Mammary epithelial cell (primary cell): ENCODE measurements at regions of chr6 and their contacts with region 1.

Region 1: GRCh38 chr6:89749918-89750317 is 69.7 kb downstream of the MDN1 start:
- DNase-seq: no peak
- H3K4me3 ChIP-seq: no peak overlapping the region
- H3K27ac ChIP-seq: no peak overlapping the region
- H3K4me1 ChIP-seq: peaks cover 8% of the 10 kb centered on the region
- H3K27me3 ChIP-seq: no peaks in the 10 kb centered on the region
- CTCF ChIP-seq: no peak

Region 2: GRCh38 chr6:89644873-89645272 is 105.0 kb before region 1 on chr6:
- CTCF ChIA-PET with region 1: no interaction called
- dilution Hi-C with region 1: loop called (anchors 5 kb)
- in situ Hi-C with region 1: no loop called
- intact Hi-C with region 1: no loop called
- DNase-seq: peak; percentile 58
- H3K4me3 ChIP-seq: no peak overlapping the region
- H3K27ac ChIP-seq: peak overlapping the region; percentile 30
- H3K4me1 ChIP-seq: peaks cover 11% of the 10 kb centered on the region
- H3K27me3 ChIP-seq: no peaks in the 10 kb centered on the region
- CTCF ChIP-seq: no peak

Region 3: GRCh38 chr6:89792873-89793272 is 43.0 kb after region 1 on chr6:
- CTCF ChIA-PET with region 1: no interaction called
- dilution Hi-C with region 1: loop called (anchors 5 kb)
- in situ Hi-C with region 1: no loop called
- intact Hi-C with region 1: no loop called
- DNase-seq: peak; percentile 7
- H3K4me3 ChIP-seq: no peak overlapping the region
- H3K27ac ChIP-seq: no peak overlapping the region
- H3K4me1 ChIP-seq: no peaks in the 10 kb centered on the region
- H3K27me3 ChIP-seq: no peaks in the 10 kb centered on the region
- CTCF ChIP-seq: peak; percentile 50 to 56

Region 4: GRCh38 chr6:89829591-89830385 is 79.9 kb after region 1 on chr6 and contains the start of gene CASP8AP2:
- CTCF ChIA-PET with region 1: no interaction called
- dilution Hi-C with region 1: no loop called
- in situ Hi-C with region 1: no loop called
- intact Hi-C with region 1: no loop called
- DNase-seq: peak; percentile 99
- H3K4me3 ChIP-seq: peak within 1 kb of the TSS; percentile 80 to 95 (median 81)
- H3K27ac ChIP-seq: peak within 1 kb of the TSS; percentile 75
- H3K4me1 ChIP-seq: no peaks in the 10 kb centered on the region
- H3K27me3 ChIP-seq: no peaks in the 10 kb centered on the region
- CTCF ChIP-seq: no peak
- total RNA-seq, gene CASP8AP2: 10.8 to 14.2 TPM